Activated CD8-positive, alpha-beta memory T cell treated with anti-CD3 and anti-CD28 coated beads, Interleukin-2, amount 10 ng/mL, durations not matched to agents 7 days and 5 days (primary cell): ENCODE measurements at regions of chr2 and their contacts with region 1.

Region 1: GRCh38 chr2:96174251-96175144 is 29.3 kb upstream of the DUSP2 start:
- DNase-seq: peak; percentile 88
- ATAC-seq: peak; percentile 99
- H3K4me3 Mint-ChIP-seq: no peak overlapping the region
- H3K27ac Mint-ChIP-seq: peak overlapping the region; percentile 3
- H3K4me1 Mint-ChIP-seq: peaks cover 5% of the 10 kb centered on the region
- H3K27me3 Mint-ChIP-seq: no peaks in the 10 kb centered on the region

Region 2: GRCh38 chr2:96024336-96025193 is 149.9 kb before region 1 on chr2:
- CTCF ChIA-PET with region 1: interaction called, 11 read pairs
- DNase-seq: no peak
- ATAC-seq: no peak
- H3K4me3 Mint-ChIP-seq: no peak overlapping the region
- H3K27ac Mint-ChIP-seq: no peak overlapping the region
- H3K4me1 Mint-ChIP-seq: peaks cover 2% of the 10 kb centered on the region
- H3K27me3 Mint-ChIP-seq: no peaks in the 10 kb centered on the region

Region 3: DNA sequence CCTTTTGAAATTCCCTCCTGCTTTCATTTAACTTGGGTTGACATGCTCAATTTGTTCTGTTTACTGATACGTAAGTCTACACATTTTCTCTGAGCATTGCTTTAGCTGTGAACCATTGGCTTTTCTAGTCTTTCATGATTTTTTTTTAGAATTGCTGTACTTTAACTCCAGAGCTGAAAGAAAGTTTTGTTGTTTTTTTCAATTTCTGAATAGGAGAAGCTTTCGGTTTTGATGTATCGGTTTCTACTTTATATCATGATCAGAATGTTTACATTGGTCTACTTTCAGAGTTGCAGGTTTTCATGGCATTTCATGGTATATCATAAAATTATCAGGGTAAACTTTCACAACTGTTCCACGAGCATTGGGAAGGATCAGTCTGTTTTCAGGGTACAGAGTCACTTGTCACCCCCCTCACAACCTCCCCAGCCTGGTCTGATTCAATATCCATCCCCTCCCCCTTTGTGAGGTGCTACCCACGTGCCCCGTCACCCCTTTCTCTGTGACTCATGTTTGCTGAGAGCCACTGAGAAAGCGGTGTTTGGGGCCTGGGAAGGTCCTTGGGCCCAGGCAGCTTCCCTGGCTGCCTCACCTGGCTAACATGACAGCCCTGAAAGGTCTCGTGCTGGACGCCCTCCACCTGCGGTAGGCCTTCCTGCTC is 43.2 kb before region 1 on chr2:
- CTCF ChIA-PET with region 1: interaction called, 675 read pairs
- DNase-seq: peak; percentile 71
- ATAC-seq: peak; percentile 59
- H3K4me3 Mint-ChIP-seq: no peak overlapping the region
- H3K27ac Mint-ChIP-seq: peak overlapping the region; percentile 77
- H3K4me1 Mint-ChIP-seq: peaks cover 32% of the 10 kb centered on the region
- H3K27me3 Mint-ChIP-seq: no peaks in the 10 kb centered on the region

Region 4: DNA sequence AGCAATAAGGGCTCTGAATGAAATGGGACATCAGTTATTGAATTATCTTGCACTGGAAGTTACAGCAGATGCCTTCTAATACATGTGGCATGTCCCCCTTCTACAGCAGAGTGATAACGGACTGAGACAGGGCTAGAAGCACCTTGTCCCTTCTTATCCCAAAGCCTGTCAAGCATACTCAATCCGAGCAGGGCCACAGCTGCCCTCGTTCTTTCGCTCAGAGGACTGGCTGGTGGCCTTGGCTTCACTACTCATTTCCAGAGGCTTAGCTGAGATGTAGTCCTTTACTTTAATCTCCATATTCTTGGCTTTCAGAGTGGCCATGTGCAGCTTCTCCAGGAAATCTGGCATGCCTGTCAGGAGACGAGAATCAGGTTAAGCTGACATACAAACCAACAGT is 12.1 kb after region 1 on chr2:
- CTCF ChIA-PET with region 1: interaction called, 33 read pairs
- DNase-seq: peak; percentile 18
- ATAC-seq: no peak
- H3K4me3 Mint-ChIP-seq: no peak overlapping the region
- H3K27ac Mint-ChIP-seq: no peak overlapping the region
- H3K4me1 Mint-ChIP-seq: peaks cover under 1% of the 10 kb centered on the region
- H3K27me3 Mint-ChIP-seq: no peaks in the 10 kb centered on the region

Region 5: DNA sequence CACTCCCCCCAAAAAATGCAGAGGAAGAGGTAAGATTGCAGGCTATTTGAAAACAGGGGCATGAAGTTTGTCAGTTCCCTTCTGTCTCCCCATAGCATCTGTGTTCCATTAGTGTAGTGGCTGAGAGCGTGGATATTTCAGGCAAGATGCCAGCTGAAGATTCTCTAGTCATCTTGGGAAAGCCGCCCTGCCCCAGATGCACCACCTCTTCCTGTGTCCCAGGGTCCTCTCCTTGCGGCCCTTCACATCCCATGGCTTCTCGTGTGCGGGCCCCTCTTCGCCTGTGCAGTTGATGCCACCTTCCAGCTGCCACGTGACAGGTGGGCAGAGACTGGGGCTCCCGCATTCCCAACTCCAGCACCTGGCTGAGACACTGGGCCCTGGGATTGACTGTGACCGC is 75.2 kb after region 1 on chr2:
- CTCF ChIA-PET with region 1: no interaction called
- DNase-seq: no peak
- ATAC-seq: no peak
- H3K4me3 Mint-ChIP-seq: no peak overlapping the region
- H3K27ac Mint-ChIP-seq: peak overlapping the region; percentile 17
- H3K4me1 Mint-ChIP-seq: peaks cover 47% of the 10 kb centered on the region
- H3K27me3 Mint-ChIP-seq: no peaks in the 10 kb centered on the region

Region 6: GRCh38 chr2:96265840-96266679 is 91.6 kb after region 1 on chr2 and contains the starts of genes CIAO1 and TMEM127:
- CTCF ChIA-PET with region 1: interaction called, 19 read pairs
- DNase-seq: peak; percentile 100
- ATAC-seq: peak; percentile 92
- H3K4me3 Mint-ChIP-seq: peak within 1 kb of the TSS; percentile 96
- H3K27ac Mint-ChIP-seq: peak within 1 kb of the TSS; percentile 87
- H3K4me1 Mint-ChIP-seq: peaks cover 39% of the 10 kb centered on the region
- H3K27me3 Mint-ChIP-seq: no peaks in the 10 kb centered on the region
- total RNA-seq, gene CIAO1: 67.0 to 76.8 TPM
- total RNA-seq, gene TMEM127: 32.7 to 36.9 TPM

Region 7: DNA sequence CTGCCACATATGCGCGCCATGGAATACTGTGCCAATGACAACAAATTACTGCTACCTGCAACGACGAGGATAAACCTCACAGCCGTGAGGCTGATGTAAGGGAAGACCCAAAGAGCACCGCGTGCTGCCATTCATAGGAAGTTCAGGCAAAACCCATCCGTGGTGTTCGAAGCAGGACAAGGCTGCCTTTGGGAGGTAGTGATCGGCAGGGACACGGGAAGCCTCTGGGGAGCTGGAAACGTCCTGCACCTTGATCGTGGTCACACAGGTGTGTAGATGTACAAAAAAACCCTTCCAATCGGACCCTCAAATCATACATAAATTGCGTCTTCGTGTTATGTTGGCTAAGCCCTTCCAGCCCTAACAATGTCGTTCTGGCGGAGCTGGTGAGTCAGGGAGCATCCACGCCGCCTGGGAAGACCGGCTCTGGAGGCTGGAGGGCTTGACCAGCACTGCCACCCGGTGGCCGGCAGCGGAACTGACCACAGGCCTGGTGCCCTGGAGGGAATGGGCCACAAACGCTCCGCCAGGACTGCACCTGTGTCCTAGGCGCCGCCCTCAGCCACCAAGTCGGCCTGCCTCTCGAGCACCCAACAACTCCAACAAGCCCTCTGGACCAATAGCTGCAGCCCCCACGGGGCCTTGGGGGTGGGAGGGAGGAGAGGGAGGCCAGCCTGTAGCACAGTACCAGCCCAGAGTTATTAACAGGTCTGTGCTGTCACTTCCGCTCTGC is 334.8 kb after region 1 on chr2:
- CTCF ChIA-PET with region 1: no interaction called
- DNase-seq: peak; percentile 69
- ATAC-seq: peak; percentile 35
- H3K4me3 Mint-ChIP-seq: no peak overlapping the region
- H3K27ac Mint-ChIP-seq: no peak overlapping the region
- H3K4me1 Mint-ChIP-seq: peaks cover 27% of the 10 kb centered on the region
- H3K27me3 Mint-ChIP-seq: no peaks in the 10 kb centered on the region

Region 8: DNA sequence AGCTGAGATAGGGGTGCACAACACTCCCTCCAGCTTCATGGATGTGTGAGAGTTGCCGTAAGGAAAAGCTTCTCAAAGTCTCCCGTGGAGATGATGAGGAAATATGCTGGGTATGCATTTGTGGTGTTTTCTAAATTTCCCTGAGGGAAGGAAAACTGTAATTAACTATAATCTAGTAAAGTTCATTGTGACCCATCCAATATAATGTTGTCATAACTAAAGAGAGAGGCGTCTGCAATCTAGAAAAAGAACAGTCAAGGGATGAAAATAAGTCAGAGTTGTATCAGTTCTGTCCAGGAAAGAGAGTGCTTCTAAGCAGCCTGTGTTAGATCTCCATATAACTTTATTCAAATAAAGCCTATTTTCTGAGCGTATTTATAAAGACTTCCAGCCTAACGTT is 572.6 kb after region 1 on chr2:
- CTCF ChIA-PET with region 1: no interaction called
- DNase-seq: no peak
- ATAC-seq: no peak
- H3K4me3 Mint-ChIP-seq: no peak overlapping the region
- H3K27ac Mint-ChIP-seq: no peak overlapping the region
- H3K4me1 Mint-ChIP-seq: peaks cover 6% of the 10 kb centered on the region
- H3K27me3 Mint-ChIP-seq: peaks cover 10% of the 10 kb centered on the region